ENCODE measurements at regions of chr7 and their contacts with region 1.

Region 1: GRCh38 chr7:75688200-75689136 is 50.3 kb downstream of the HIP1 start:
- DNase-seq: peak; percentile 80 to 98 (median 88)

Region 2: GRCh38 chr7:75575488-75576121 is 112.9 kb before region 1 on chr7:
- intact Hi-C with region 1: no loop called
- DNase-seq: peak in 2 of 10 donors; percentile 18 to 19

Region 3: DNA sequence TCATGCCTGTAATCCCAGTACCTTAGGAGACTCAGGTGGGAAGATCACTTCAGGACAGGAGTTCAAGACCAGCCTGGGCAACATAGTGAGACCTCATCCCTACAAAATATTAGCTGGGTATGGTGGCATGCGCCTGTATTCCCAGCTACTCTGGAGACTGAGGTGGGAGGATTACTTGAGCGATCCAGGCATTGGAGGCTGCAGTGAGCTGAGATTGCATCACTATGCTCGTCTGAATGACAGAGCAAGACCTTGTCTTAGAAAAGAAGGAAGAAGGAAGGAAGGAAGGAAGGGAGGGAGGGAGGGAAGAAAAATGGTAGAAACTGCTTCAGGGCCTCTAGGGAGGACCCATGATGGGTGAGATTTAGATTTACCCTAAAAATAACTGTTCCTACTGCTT is 84.1 kb before region 1 on chr7:
- intact Hi-C with region 1: loop called (anchors 5 kb)
- DNase-seq: peak in 1 of 10 donors; percentile 30